ENCODE measurements at regions of chr3 and their contacts with region 1.

Region 1: GRCh38 chr3:152183473-152183872 is 85.3 kb upstream of the MBNL1 start:
- DNase-seq: no peak
- ATAC-seq: peak; percentile 95
- H3K4me3 ChIP-seq: no peak overlapping the region
- H3K27ac ChIP-seq: no peak overlapping the region
- H3K4me1 ChIP-seq: no peaks in the 10 kb centered on the region
- H3K27me3 ChIP-seq: no peaks in the 10 kb centered on the region
- CTCF ChIP-seq: peak; percentile 63 to 67 (median 65)
- EP300 ChIP-seq: no peak
- POLR2A ChIP-seq: no peak
- RAD21 ChIP-seq: peak; percentile 70

Region 2: GRCh38 chr3:151724576-151725562 is 458.6 kb before region 1 on chr3:
- CTCF ChIA-PET with region 1: no interaction called
- POLR2A ChIA-PET with region 1: no interaction called
- RAD21 ChIA-PET with region 1: no interaction called
- SMC1A ChIA-PET with region 1: no interaction called
- in situ Hi-C with region 1: no loop called
- intact Hi-C with region 1: no loop called
- DNase-seq: no peak
- ATAC-seq: no peak
- H3K4me3 ChIP-seq: no peak overlapping the region
- H3K27ac ChIP-seq: no peak overlapping the region
- H3K4me1 ChIP-seq: no peaks in the 10 kb centered on the region
- H3K27me3 ChIP-seq: no peaks in the 10 kb centered on the region
- CTCF ChIP-seq: no peak
- EP300 ChIP-seq: no peak
- POLR2A ChIP-seq: no peak
- RAD21 ChIP-seq: no peak

Region 3: DNA sequence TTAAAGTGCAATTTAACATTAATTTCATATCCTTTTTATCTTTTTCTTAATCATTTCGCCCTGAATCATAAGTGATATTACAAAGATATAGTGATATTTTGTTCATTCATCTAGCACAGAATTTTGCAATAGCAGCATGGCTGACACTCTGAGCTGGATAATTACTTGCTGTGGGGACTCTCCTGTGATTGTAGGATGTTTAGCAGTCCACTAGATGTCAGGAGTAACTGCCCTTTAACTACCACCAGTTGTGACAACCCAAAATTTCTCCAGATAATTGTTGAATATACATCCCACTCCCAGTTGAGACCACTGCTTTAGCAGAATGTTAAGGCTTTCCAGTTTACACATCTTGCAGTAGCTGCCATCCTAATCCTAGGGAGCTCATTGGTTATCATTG is 111.5 kb before region 1 on chr3:
- CTCF ChIA-PET with region 1: interaction called, 12 read pairs
- POLR2A ChIA-PET with region 1: no interaction called
- RAD21 ChIA-PET with region 1: interaction called, 4 read pairs
- SMC1A ChIA-PET with region 1: interaction called, 18 read pairs
- in situ Hi-C with region 1: no loop called
- intact Hi-C with region 1: loop called (anchors 2 kb)
- DNase-seq: no peak
- ATAC-seq: peak; percentile 96
- H3K4me3 ChIP-seq: no peak overlapping the region
- H3K27ac ChIP-seq: no peak overlapping the region
- H3K4me1 ChIP-seq: no peaks in the 10 kb centered on the region
- H3K27me3 ChIP-seq: no peaks in the 10 kb centered on the region
- CTCF ChIP-seq: peak; percentile 47 to 64 (median 60)
- EP300 ChIP-seq: no peak
- POLR2A ChIP-seq: no peak
- RAD21 ChIP-seq: peak; percentile 53

Region 4: DNA sequence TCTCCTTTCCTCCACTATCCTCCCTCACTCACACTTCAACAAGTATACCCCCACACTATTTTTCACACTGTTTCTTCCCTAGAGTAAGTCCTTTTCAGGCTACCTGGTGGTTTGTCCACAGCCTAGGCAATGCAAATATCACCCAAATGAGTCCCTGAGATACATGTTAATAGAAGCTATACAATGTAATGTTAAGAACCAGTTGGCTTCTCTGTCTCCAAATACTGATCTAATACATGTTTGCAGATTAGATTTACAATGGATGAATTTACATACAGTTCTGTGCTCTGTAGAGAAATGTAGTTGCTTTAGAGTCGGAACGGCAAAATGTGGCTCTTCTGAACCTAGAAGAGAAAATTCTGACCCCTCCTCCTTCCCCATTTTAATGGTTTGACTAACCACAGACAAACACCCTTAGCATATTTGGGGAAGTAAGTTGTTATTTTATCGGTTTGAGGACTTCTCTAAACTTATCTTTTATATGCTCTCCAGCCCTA is 21.7 kb after region 1 on chr3:
- CTCF ChIA-PET with region 1: interaction called, 14 read pairs
- POLR2A ChIA-PET with region 1: interaction called, 3 read pairs
- RAD21 ChIA-PET with region 1: interaction called, 16 read pairs
- SMC1A ChIA-PET with region 1: interaction called, 21 read pairs
- in situ Hi-C with region 1: no loop called
- intact Hi-C with region 1: no loop called
- DNase-seq: no peak
- ATAC-seq: peak; percentile 53
- H3K4me3 ChIP-seq: peak overlapping the region; percentile 30
- H3K27ac ChIP-seq: peak overlapping the region; percentile 82
- H3K4me1 ChIP-seq: peaks cover 11% of the 10 kb centered on the region; the same call in 1 of the 2 replicates
- H3K27me3 ChIP-seq: no peaks in the 10 kb centered on the region
- CTCF ChIP-seq: no peak
- EP300 ChIP-seq: no peak
- POLR2A ChIP-seq: no peak
- RAD21 ChIP-seq: no peak

Region 5: GRCh38 chr3:152258448-152259393 is 75.2 kb after region 1 on chr3:
- CTCF ChIA-PET with region 1: interaction called, 9 read pairs
- POLR2A ChIA-PET with region 1: no interaction called
- RAD21 ChIA-PET with region 1: interaction called, 6 read pairs
- SMC1A ChIA-PET with region 1: interaction called, 13 read pairs
- in situ Hi-C with region 1: no loop called
- intact Hi-C with region 1: no loop called
- DNase-seq: no peak
- ATAC-seq: peak; percentile 75
- H3K4me3 ChIP-seq: no peak overlapping the region; the same call in 1 of the 2 replicates
- H3K27ac ChIP-seq: peak overlapping the region; percentile 11; the same call in 1 of the 2 replicates
- H3K4me1 ChIP-seq: peaks cover 27% of the 10 kb centered on the region
- H3K27me3 ChIP-seq: no peaks in the 10 kb centered on the region
- CTCF ChIP-seq: no peak
- EP300 ChIP-seq: no peak
- POLR2A ChIP-seq: no peak
- RAD21 ChIP-seq: no peak

Region 6: DNA sequence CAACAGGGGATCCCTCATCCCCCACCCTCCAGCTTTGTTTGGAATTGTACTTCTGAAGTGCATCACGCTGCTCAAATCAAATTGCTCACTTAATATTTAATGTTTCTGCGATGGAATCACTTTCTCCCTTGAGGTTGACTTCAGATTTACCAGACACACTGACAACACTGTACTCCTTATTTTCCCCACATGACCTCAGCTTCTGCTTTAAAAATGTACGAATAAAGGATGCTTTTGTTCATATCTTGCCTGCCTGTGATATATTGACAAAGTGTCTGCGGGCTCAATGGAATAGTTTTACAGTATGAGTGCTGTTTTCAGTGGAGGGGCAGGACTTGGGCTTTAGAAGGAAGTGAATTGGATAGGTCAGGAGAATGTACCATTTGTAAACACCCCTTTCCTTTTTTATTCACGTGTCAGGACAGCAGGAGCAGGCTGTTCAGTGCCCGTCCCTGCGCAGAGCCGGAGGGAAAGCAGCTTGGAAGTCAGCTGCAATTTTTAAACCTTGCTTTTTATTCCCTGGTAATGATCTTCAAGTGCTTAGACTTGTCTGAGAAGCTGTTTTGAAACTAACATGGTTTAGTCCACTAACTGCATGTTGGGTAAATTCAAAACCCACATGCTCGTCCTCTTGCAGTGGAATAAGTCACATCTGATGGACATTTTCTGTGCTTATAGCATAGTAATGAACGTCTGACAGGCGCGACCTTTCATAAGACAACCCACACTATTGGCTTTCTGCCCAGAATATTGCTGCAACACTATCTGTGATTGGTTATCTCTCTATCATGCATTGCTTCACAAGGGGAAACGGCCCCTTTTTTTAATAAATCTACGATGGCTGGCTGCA is 115.1 kb after region 1 on chr3:
- CTCF ChIA-PET with region 1: interaction called, 4 read pairs
- POLR2A ChIA-PET with region 1: interaction called, 6 read pairs
- RAD21 ChIA-PET with region 1: interaction called, 3 read pairs
- SMC1A ChIA-PET with region 1: interaction called, 17 read pairs
- in situ Hi-C with region 1: no loop called
- intact Hi-C with region 1: no loop called
- DNase-seq: peak; percentile 74
- ATAC-seq: peak; percentile 71
- H3K4me3 ChIP-seq: peak overlapping the region; percentile 8
- H3K27ac ChIP-seq: peak overlapping the region; percentile 56
- H3K4me1 ChIP-seq: peaks cover 40% of the 10 kb centered on the region
- H3K27me3 ChIP-seq: no peaks in the 10 kb centered on the region
- CTCF ChIP-seq: no peak
- EP300 ChIP-seq: no peak
- POLR2A ChIP-seq: no peak
- RAD21 ChIP-seq: no peak

Region 7: DNA sequence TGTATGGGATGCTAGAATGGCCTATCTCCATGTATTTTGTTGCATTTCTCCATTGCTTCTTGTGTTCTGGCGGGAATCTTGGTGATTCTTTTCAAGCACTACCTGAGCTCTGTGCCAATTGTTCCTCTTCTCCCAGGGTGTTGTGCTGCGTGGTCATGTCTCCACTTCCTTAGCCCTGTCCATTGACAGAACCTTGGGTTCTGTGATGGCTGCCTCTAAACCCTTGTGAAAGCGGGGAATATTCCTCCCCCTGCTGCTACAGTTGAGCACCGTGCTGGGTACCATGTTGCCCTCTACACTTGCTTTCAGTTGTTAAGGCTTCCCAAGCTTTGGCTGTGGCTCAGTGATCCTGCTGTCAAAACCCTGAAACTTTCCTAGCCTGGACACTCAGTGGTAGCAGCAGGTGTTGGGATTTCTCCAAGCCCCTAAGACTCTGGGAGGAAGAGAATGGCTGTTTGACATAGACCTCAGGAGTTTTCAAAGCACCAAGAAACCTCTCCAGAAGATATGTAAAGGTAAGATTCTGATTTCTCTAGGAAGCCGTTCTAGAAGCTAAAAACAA is 154.8 kb after region 1 on chr3:
- CTCF ChIA-PET with region 1: interaction called, 17 read pairs
- POLR2A ChIA-PET with region 1: no interaction called
- RAD21 ChIA-PET with region 1: interaction called, 12 read pairs
- SMC1A ChIA-PET with region 1: interaction called, 11 read pairs
- in situ Hi-C with region 1: no loop called
- intact Hi-C with region 1: no loop called
- DNase-seq: no peak
- ATAC-seq: no peak
- H3K4me3 ChIP-seq: no peak overlapping the region
- H3K27ac ChIP-seq: no peak overlapping the region
- H3K4me1 ChIP-seq: peaks cover 23% of the 10 kb centered on the region
- H3K27me3 ChIP-seq: no peaks in the 10 kb centered on the region
- CTCF ChIP-seq: no peak
- EP300 ChIP-seq: no peak
- POLR2A ChIP-seq: no peak
- RAD21 ChIP-seq: no peak

Region 8: GRCh38 chr3:152436707-152437590 is 253.5 kb after region 1 on chr3:
- CTCF ChIA-PET with region 1: interaction called, 282 read pairs
- POLR2A ChIA-PET with region 1: no interaction called
- RAD21 ChIA-PET with region 1: interaction called, 138 read pairs
- SMC1A ChIA-PET with region 1: interaction called, 211 read pairs
- in situ Hi-C with region 1: loop called (anchors 5 kb)
- intact Hi-C with region 1: no loop called
- DNase-seq: no peak
- ATAC-seq: no peak
- H3K4me3 ChIP-seq: no peak overlapping the region
- H3K27ac ChIP-seq: no peak overlapping the region
- H3K4me1 ChIP-seq: no peaks in the 10 kb centered on the region; the same call in 1 of the 2 replicates
- H3K27me3 ChIP-seq: no peaks in the 10 kb centered on the region
- CTCF ChIP-seq: no peak
- EP300 ChIP-seq: no peak
- POLR2A ChIP-seq: no peak
- RAD21 ChIP-seq: no peak

Measured in GM12878 (cell line).